Breast epithelium (tissue), 4 donors: ENCODE measurements at regions of chr18 and their contacts with region 1.

Region 1: DNA sequence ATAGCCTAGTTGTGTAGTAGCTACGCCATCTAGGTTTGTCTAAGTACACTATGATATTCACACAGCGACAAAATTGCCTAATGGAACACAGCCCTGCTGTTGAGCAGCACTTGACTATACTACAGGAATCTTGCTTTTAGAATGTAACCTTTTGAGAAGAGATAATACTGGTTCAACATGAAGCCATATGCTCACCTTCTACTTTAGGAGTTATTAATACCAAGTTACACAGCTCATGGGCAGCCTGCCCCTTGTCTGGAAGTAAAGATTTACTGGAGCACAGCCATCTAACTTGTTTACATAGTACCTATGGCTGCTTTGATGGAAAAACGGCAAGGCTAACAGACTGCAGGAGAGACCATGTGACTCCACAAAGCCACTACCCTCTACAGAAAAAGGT is 174.8 kb downstream of the DYM start:
- DNase-seq: no peak
- H3K4me3 ChIP-seq: no peak overlapping the region
- H3K27ac ChIP-seq: no peak overlapping the region
- H3K4me1 ChIP-seq: no peaks in the 10 kb centered on the region
- H3K27me3 ChIP-seq: no peaks in the 10 kb centered on the region
- CTCF ChIP-seq: no peak
- POLR2A ChIP-seq: no peak

Region 2: GRCh38 chr18:48589797-48590519 is 695.7 kb before region 1 on chr18:
- intact Hi-C with region 1: loop called (anchors 5 kb)
- DNase-seq: peak in 1 of 2 donors; percentile 52
- H3K4me3 ChIP-seq: no peak overlapping the region
- H3K27ac ChIP-seq: no peak overlapping the region
- H3K4me1 ChIP-seq: peaks cover 3 to 10% of the 10 kb centered on the region in 2 donors
- H3K27me3 ChIP-seq: no peaks in the 10 kb centered on the region
- CTCF ChIP-seq: no peak
- POLR2A ChIP-seq: no peak

Region 3: DNA sequence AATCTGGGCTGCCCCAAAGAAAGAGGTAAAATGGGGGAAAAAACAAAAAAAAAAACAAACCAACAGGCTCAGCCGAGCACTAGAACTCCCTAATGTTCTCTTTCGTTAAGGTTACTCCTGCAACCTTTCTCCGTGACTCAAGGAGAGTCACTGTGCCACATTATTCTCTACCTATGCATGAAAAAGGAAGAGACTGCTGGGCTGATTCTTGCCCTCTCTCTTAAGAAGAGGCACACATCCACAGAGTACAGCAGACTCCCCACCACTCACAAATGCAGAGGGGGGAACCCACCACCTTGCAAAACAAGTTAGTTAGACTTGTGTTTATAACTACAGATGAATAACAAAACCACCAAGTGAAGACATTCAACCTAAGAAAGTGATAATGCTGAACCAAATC is 26.7 kb before region 1 on chr18:
- intact Hi-C with region 1: no loop called
- DNase-seq: no peak
- H3K4me3 ChIP-seq: no peak overlapping the region
- H3K27ac ChIP-seq: no peak overlapping the region
- H3K4me1 ChIP-seq: no peaks in the 10 kb centered on the region
- H3K27me3 ChIP-seq: no peaks in the 10 kb centered on the region
- CTCF ChIP-seq: no peak
- POLR2A ChIP-seq: no peak